Sigmoid colon (tissue), 7 donors: ENCODE measurements at regions of chr2 and their contacts with region 1.

Region 1: DNA sequence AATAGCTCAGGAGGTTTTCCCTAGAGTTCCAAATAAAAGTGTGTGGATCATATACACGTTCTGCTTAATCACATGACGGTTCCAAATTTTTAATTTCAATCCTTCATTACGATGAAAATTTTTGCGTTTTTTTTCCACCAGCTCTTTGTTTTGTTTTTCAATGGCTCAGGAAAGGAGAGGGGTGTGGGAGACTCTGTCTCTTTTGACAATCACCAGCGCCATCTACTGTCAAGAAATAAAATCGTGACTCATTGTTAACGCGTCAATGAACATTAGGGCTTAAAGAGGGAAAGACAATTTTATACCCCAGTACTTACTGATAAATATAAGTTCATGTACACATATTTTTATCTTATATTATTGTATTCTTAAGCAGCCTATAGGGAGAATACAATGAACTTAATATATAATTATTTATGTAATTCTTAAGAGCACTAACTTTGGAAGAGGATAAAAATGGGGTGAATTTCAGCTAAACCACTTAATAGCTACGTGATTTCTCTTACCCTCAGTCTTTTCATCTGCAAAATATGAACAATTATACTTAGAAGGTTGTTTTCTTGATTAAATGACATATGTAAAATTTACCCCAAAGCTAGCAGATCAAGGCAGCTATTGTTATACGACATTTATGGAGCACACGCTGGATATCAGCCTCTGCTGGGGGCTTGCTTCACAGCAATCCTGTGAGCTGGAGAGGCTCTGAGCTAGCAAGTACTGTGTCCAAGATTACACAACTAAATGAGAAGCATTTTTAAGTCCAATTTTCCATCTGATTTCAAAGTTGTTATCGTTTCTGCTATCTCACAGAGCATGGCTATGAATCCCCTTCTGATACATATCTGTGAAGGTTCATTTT is 47.4 kb upstream of the RMDN2 start:
- DNase-seq: no peak
- H3K4me3 ChIP-seq: no peak overlapping the region
- H3K27ac ChIP-seq: peak overlapping the region in 2 of 4 donors; percentile 4 to 58
- H3K4me1 ChIP-seq: peaks cover 0 to 21% (median 15%) of the 10 kb centered on the region in 4 donors
- H3K27me3 ChIP-seq: no peaks in the 10 kb centered on the region
- CTCF ChIP-seq: peak; percentile 62 to 81 (median 74)
- EP300 ChIP-seq: no peak
- POLR2A ChIP-seq: no peak

Region 2: DNA sequence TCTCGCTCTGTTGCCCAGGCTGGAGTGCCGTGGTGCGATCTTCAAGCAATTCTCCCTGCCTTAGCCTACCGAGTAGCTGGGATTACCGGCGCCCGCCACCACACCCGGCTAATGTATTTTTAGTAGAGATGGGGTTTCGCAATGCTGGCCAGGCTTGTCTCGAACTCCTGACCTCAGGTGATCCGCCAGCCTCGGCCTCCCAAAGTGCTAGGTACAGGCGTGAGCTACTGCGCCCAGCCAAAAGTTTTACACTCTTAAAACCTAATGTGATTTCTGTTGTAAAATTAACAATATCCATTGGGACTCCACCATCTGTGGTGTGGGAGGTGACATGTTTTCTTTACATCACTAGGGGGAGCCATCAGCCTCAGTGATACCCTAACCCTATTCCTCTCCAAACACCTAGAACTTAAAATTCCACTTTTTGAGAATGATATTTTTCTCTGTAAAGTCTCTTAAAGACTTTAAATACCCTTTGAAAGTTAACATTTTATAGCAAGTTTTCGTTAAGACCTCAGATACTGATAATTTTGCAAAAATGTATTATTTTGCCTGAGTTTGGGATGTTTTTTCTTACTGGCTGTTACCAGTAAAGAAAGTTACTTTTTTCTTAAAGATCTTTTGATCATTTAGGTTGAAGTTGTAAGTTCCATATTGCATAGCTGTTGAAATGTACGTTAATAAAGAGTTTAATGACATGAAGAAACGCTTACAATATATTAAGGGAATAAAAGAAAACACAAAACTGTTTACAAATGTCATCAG is 709.3 kb before region 1 on chr2:
- intact Hi-C with region 1: loop called (anchors 10 kb)
- DNase-seq: no peak
- H3K4me3 ChIP-seq: no peak overlapping the region
- H3K27ac ChIP-seq: no peak overlapping the region
- H3K4me1 ChIP-seq: no peaks in the 10 kb centered on the region
- H3K27me3 ChIP-seq: no peaks in the 10 kb centered on the region
- CTCF ChIP-seq: peak; percentile 6 to 60 (median 38)
- EP300 ChIP-seq: no peak
- POLR2A ChIP-seq: no peak

Region 3: DNA sequence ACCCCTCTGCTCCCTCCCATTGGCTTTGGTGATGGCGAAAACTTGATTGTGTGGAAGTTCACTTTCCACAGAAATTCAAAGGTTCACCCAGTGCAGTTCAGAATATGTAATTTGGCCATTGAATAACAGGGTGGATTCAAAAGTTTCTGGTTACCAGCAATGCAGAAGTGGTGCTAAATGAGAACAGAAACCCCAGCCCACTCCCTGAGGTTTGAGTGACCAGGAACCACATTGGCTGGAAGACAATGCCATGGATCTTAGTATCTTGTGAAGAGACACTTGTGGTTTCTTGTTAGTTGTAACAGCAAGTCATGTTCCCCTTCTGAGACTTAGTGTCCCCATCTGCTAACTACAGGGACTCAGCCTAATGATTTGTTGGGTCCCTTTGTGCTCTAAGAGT is 483.4 kb before region 1 on chr2:
- intact Hi-C with region 1: loop called (anchors 1 kb)
- DNase-seq: no peak
- H3K4me3 ChIP-seq: no peak overlapping the region
- H3K27ac ChIP-seq: no peak overlapping the region
- H3K4me1 ChIP-seq: peaks cover 0 to 18% (median 12%) of the 10 kb centered on the region in 4 donors
- H3K27me3 ChIP-seq: no peaks in the 10 kb centered on the region
- CTCF ChIP-seq: no peak
- EP300 ChIP-seq: no peak
- POLR2A ChIP-seq: no peak

Region 4: DNA sequence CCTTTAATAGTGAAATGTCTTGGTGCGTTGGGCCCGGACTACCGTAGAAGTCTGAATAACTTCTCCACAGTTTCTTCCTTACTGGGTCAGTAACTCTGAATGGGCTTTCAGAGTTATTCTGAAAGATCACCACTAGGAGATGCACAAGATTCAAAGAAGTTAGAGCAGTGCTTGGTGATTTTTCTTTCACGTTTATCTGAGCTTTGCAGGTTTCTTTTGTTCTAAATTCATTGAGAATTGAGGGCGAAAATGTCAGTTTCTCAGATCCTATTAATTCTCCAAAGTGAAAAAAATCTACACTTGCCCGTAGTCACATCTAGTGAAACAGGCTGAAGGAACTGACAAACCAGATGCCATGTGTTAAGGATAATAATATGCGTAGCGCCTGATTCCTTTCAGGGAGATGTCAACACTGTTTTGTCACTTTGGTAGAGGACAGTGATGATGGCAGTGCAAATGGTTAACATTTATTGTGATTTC is 463.2 kb before region 1 on chr2:
- intact Hi-C with region 1: loop called (anchors 2 kb)
- DNase-seq: peak; percentile 74
- H3K4me3 ChIP-seq: no peak overlapping the region
- H3K27ac ChIP-seq: peak overlapping the region; percentile 48 to 76 (median 62)
- H3K4me1 ChIP-seq: peaks cover 0 to 28% (median 22%) of the 10 kb centered on the region in 4 donors
- H3K27me3 ChIP-seq: no peaks in the 10 kb centered on the region
- CTCF ChIP-seq: peak; percentile 80 to 98 (median 96)
- EP300 ChIP-seq: no peak
- POLR2A ChIP-seq: no peak

Region 5: DNA sequence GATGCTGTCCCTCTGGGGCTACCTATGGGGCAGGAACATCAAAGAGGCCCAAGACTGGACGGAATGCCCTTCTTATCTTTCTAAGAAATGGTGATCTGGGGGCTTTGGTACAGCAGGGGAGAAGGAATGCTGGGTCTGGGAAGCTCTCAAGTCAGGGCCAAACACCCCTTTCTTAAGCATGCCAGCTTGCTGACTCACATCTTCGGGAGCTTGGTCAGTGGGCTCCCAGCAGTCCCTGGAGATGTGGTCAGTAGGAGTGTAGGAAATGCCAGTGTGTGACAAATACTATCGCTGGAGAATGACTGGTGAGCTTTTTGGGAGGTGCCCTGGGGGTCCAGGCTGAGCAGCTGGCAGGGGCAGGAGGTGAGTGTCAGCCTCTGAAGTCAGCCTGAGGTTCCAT is 101.2 kb before region 1 on chr2:
- intact Hi-C with region 1: loop called (anchors 5 kb)
- DNase-seq: no peak
- H3K4me3 ChIP-seq: no peak overlapping the region
- H3K27ac ChIP-seq: peak overlapping the region; percentile 80 to 88 (median 82)
- H3K4me1 ChIP-seq: peaks cover 0 to 100% (median 98%) of the 10 kb centered on the region in 4 donors
- H3K27me3 ChIP-seq: no peaks in the 10 kb centered on the region
- CTCF ChIP-seq: no peak
- EP300 ChIP-seq: no peak
- POLR2A ChIP-seq: no peak

Region 6: GRCh38 chr2:37829202-37829601 is 48.5 kb before region 1 on chr2:
- intact Hi-C with region 1: no loop called
- DNase-seq: no peak
- H3K4me3 ChIP-seq: no peak overlapping the region
- H3K27ac ChIP-seq: peak overlapping the region; percentile 27 to 71 (median 52)
- H3K4me1 ChIP-seq: peaks cover 0 to 61% (median 30%) of the 10 kb centered on the region in 4 donors
- H3K27me3 ChIP-seq: no peaks in the 10 kb centered on the region
- CTCF ChIP-seq: no peak
- EP300 ChIP-seq: no peak
- POLR2A ChIP-seq: no peak